OCI-LY7 (cell line): ENCODE measurements at regions of chrX and their contacts with region 1.

Region 1: GRCh38 chrX:155216179-155216939 is at the start of gene VBP1:
- DNase-seq: peak; percentile 92
- H3K4me3 ChIP-seq: peak within 1 kb of the TSS; percentile 77
- H3K27ac ChIP-seq: peak within 1 kb of the TSS; percentile 56
- H3K4me1 ChIP-seq: peaks cover 22% of the 10 kb centered on the region
- CTCF ChIP-seq: peak; percentile 62
- total RNA-seq, gene VBP1: 42.9 and 45.5 TPM in 2 replicates

Region 2: DNA sequence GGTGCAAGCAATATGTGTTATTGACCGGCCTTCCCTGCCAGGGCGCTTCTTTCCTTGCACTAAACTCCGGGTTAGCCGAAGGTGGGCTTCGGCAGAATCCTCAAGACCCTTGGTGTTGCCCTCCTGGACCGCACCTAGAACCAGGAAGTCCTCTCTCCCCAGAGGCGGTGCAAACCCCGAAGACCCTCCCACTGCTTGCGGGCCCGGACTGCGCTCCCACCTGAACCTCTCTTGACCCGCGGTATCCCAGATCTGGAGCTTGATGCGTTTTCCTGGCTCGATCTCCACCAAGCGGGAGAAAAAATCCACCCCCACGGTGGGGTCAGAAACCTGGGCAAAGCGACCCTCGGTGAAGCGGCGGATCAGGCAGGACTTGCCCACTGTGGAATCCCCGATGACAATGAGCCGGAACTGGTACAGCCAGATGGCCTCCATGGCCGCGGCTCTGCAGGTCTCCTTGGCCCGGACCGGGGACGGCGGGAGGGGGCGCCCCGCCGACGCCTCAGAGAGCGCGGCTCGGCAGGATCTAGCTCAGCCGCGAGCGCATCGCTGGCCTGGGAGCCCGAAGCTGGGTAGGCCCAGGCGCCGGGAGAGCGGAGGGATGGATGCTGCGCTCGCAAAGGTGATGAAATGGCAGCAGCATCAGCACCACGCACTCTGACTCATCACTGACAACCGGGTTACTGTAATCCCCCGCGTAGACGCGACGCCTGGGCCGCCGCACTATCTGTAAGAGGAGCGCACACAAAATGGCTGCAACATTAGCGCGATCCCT is 47.7 kb after region 1 on chrX and contains the start of gene RAB39B:
- CTCF ChIA-PET with region 1: interaction called, 3 read pairs
- POLR2A ChIA-PET with region 1: interaction called, 4 read pairs
- intact Hi-C with region 1: loop called (anchors 1 kb)
- DNase-seq: peak; percentile 76
- H3K4me3 ChIP-seq: peak within 1 kb of the TSS; percentile 80
- H3K27ac ChIP-seq: peak within 1 kb of the TSS; percentile 70
- H3K4me1 ChIP-seq: peaks cover 12% of the 10 kb centered on the region
- CTCF ChIP-seq: peak; percentile 40
- total RNA-seq, gene RAB39B: 6.6 and 7.2 TPM in 2 replicates